SK-N-SH (cell line): ENCODE measurements at regions of chr10 and their contacts with region 1.

Region 1: DNA sequence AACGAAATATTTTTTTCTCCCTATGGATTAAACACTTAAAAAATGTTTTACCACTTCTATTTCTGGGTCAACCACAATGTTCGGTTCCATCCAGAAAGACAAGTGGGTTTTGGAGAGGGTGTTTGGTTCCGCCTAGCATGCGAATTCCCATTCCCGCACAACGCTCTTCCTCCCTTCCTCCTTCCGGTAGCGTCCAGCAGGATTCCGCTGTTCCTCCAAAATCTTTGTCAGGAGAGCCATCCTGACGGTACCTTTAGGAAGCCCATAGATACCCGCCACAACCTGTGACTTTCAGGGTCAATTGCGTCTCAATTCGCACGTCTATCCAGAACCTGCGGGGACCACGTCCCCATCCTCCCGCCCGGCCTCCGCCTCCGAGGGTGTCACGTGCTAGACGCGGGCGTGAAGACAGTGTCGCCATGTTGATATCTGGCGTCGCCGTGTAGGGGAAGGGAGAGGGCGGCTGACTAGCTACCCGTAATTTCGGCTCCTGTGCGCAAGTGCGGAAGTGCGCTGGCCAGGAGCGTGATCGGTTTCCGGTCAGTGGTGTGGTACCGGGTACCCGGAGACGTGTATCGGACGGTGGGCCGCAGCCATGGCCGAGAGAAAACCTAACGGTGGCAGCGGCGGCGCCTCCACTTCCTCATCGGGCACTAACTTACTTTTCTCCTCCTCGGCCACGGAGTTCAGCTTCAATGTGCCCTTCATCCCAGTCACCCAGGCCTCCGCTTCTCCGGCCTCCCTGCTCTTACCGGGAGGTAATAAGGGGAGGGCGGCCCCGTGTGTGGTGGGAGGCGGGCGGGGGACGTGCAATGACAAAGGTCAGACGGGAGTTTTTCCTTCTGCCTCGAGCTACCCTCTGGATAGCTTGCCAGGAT is at the start of gene SEC23IP:
- DNase-seq: peak; percentile 91
- H3K4me3 ChIP-seq: peak within 1 kb of the TSS; percentile 95 to 99
- H3K27ac ChIP-seq: peak within 1 kb of the TSS; percentile 83 to 87
- H3K4me1 ChIP-seq: peaks cover 0 to 24% of the 10 kb centered on the region in 2 experiments; a peak in 3 of 4 replicates
- H3K27me3 ChIP-seq: no peaks in the 10 kb centered on the region
- CTCF ChIP-seq: no peak
- EP300 ChIP-seq: peak in 1 of 2 experiments; percentile 10; a peak in 1 of 4 replicates
- RAD21 ChIP-seq: no peak
- polyA plus RNA-seq, gene SEC23IP: 23.8 and 32.2 TPM in 2 replicates

Region 2: DNA sequence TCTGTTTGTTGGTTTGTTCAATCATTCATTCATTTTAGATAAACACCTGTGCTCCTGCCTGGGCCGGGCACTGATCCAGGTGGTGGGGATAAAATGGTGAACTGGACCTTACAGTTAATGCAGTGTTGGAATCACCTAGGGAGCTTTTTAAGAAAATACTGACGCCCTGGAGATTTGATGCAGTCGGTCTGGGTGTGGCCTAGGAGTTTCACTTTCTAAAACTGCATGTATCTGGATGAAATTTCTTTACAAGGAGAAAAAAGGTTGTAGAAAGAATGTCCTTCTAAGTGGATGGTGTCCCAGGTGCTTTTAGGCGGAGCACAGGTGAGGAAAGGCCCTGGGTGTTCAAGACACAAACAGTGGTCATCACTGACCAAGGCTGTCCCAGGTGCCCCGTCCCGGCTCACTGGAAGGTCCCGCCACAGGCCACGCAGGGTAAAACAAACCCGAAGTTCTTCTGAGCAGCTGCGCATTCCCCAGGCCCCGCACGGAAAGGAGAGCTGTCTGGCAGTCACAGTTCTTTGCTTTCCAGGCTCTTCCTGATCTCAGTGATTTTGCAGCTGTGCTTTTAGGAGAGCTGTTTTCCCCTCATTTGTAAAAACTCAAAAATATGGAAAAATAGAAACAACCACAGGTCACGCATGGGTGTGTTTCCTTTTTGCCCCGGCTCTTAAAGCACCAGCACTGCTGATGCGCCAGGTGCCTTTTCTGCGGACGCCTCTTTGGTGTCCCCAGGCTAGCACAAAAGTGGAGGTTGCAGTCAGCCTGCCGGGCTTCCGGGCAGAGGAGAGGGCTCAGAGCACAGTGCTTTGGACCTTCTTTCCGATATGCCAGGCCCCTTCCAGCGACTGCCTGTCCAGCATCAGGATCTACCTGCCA is 523.2 kb before region 1 on chr10:
- CTCF ChIA-PET with region 1: no interaction called
- POLR2A ChIA-PET with region 1: no interaction called
- DNase-seq: no peak
- H3K4me3 ChIP-seq: no peak overlapping the region
- H3K27ac ChIP-seq: no peak overlapping the region
- H3K4me1 ChIP-seq: peaks cover 15 to 62% of the 10 kb centered on the region in 2 experiments
- H3K27me3 ChIP-seq: no peaks in the 10 kb centered on the region
- CTCF ChIP-seq: no peak
- EP300 ChIP-seq: no peak
- RAD21 ChIP-seq: no peak

Region 3: GRCh38 chr10:119858063-119858462 is 34.4 kb before region 1 on chr10:
- CTCF ChIA-PET with region 1: no interaction called
- POLR2A ChIA-PET with region 1: no interaction called
- DNase-seq: no peak
- H3K4me3 ChIP-seq: no peak overlapping the region
- H3K27ac ChIP-seq: no peak overlapping the region
- H3K4me1 ChIP-seq: peaks cover 0 to 5% of the 10 kb centered on the region in 2 experiments; a peak in 1 of 4 replicates
- H3K27me3 ChIP-seq: no peaks in the 10 kb centered on the region
- CTCF ChIP-seq: no peak
- EP300 ChIP-seq: no peak
- RAD21 ChIP-seq: no peak

Region 4: GRCh38 chr10:119872860-119873681 is 19.4 kb before region 1 on chr10:
- CTCF ChIA-PET with region 1: interaction called, 23 read pairs
- POLR2A ChIA-PET with region 1: interaction called, 18 read pairs
- DNase-seq: peak; percentile 95
- H3K4me3 ChIP-seq: peak overlapping the region; percentile 79 to 88
- H3K27ac ChIP-seq: peak overlapping the region; percentile 43 to 94
- H3K4me1 ChIP-seq: peaks cover 5 to 11% of the 10 kb centered on the region in 2 experiments; a peak in 3 of 4 replicates
- H3K27me3 ChIP-seq: no peaks in the 10 kb centered on the region
- CTCF ChIP-seq: no peak
- EP300 ChIP-seq: no peak
- RAD21 ChIP-seq: no peak

Region 5: GRCh38 chr10:119940487-119940886 is 48.1 kb after region 1 on chr10:
- CTCF ChIA-PET with region 1: no interaction called
- POLR2A ChIA-PET with region 1: no interaction called
- DNase-seq: no peak
- H3K4me3 ChIP-seq: no peak overlapping the region
- H3K27ac ChIP-seq: no peak overlapping the region
- H3K4me1 ChIP-seq: no peaks in the 10 kb centered on the region
- H3K27me3 ChIP-seq: no peaks in the 10 kb centered on the region
- CTCF ChIP-seq: no peak
- EP300 ChIP-seq: no peak
- RAD21 ChIP-seq: no peak